Activated naive CD4-positive, alpha-beta T cell treated with anti-CD3 and anti-CD28 coated beads, Interleukin-2, amount 10 ng/mL, durations not matched to agents 7 days and 5 days (primary cell): ENCODE measurements at regions of chr2 and their contacts with region 1.

Region 1: GRCh38 chr2:10072656-10073480 is 7.3 kb downstream of the CYS1 start:
- DNase-seq: peak; percentile 88
- H3K4me3 Mint-ChIP-seq: no peak overlapping the region
- H3K27ac Mint-ChIP-seq: no peak overlapping the region
- H3K4me1 Mint-ChIP-seq: peaks cover 6% of the 10 kb centered on the region
- H3K27me3 Mint-ChIP-seq: peaks cover 72% of the 10 kb centered on the region

Region 2: GRCh38 chr2:9984217-9984739 is 88.6 kb before region 1 on chr2:
- CTCF ChIA-PET with region 1: interaction called, 11 read pairs
- DNase-seq: no peak
- H3K4me3 Mint-ChIP-seq: no peak overlapping the region
- H3K27ac Mint-ChIP-seq: no peak overlapping the region
- H3K4me1 Mint-ChIP-seq: peaks cover 14% of the 10 kb centered on the region
- H3K27me3 Mint-ChIP-seq: peaks cover 40% of the 10 kb centered on the region

Region 3: DNA sequence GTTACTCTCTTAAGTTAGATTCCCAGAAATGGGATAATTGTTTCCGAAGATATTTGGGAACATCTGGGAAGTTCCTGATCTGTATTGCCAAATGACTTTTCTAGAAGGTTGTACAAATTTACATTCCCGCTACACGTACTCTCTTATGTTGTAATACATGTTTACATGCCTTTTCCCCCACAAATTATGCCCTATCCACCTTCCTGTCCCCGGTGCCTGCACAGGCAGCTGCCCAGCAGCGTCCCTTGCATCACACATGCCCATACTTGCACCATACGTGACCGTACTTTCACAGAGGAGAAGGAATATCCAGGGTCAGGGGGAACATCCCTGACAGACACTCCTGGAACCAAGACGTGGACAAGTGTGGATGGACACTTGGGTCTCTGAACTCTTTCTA is 53.7 kb before region 1 on chr2:
- CTCF ChIA-PET with region 1: no interaction called
- DNase-seq: no peak
- H3K4me3 Mint-ChIP-seq: no peak overlapping the region
- H3K27ac Mint-ChIP-seq: no peak overlapping the region
- H3K4me1 Mint-ChIP-seq: no peaks in the 10 kb centered on the region
- H3K27me3 Mint-ChIP-seq: peaks cover 45% of the 10 kb centered on the region

Region 4: DNA sequence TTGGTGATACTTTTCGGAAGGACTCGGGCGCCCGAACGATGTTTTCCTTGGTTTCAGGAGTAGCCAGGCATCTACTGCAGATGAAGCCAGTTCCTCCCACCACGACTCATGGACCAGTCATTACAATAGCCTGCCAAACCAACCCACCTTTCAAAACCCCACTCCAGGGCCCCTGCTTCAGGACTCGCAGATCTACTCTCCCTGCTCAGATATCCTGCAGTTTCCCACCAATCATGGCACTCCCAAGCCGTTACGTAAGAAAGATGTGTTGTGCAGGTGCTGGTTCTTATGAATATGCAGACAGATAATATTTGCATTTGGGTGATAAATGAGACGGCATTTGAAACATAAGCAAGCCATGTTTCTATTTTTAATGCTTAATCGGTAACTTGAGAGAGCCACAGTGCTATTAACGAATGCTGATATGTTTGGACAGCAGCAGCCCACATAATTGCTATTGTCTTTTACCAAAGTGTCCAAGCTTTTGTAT is 10.9 kb after region 1 on chr2:
- CTCF ChIA-PET with region 1: interaction called, 48 read pairs
- DNase-seq: no peak
- H3K4me3 Mint-ChIP-seq: no peak overlapping the region
- H3K27ac Mint-ChIP-seq: no peak overlapping the region
- H3K4me1 Mint-ChIP-seq: peaks cover 14% of the 10 kb centered on the region
- H3K27me3 Mint-ChIP-seq: peaks cover 91% of the 10 kb centered on the region

Region 5: GRCh38 chr2:10097352-10098148 is 24.7 kb after region 1 on chr2:
- CTCF ChIA-PET with region 1: interaction called, 83 read pairs
- DNase-seq: peak; percentile 51
- H3K4me3 Mint-ChIP-seq: no peak overlapping the region
- H3K27ac Mint-ChIP-seq: no peak overlapping the region
- H3K4me1 Mint-ChIP-seq: peaks cover 6% of the 10 kb centered on the region
- H3K27me3 Mint-ChIP-seq: peaks cover 78% of the 10 kb centered on the region

Region 6: GRCh38 chr2:10122386-10123280 is 49.8 kb after region 1 on chr2 and contains the start of gene RRM2:
- CTCF ChIA-PET with region 1: interaction called, 52 read pairs
- DNase-seq: peak; percentile 96
- H3K4me3 Mint-ChIP-seq: peak within 1 kb of the TSS; percentile 95
- H3K27ac Mint-ChIP-seq: peak within 1 kb of the TSS; percentile 98
- H3K4me1 Mint-ChIP-seq: peaks cover 75% of the 10 kb centered on the region
- H3K27me3 Mint-ChIP-seq: no peaks in the 10 kb centered on the region

Region 7: GRCh38 chr2:10408649-10409579 is 336.0 kb after region 1 on chr2:
- CTCF ChIA-PET with region 1: interaction called, 10 read pairs
- DNase-seq: peak; percentile 88
- H3K4me3 Mint-ChIP-seq: peak overlapping the region; percentile 56
- H3K27ac Mint-ChIP-seq: peak overlapping the region; percentile 92
- H3K4me1 Mint-ChIP-seq: peaks cover 42% of the 10 kb centered on the region
- H3K27me3 Mint-ChIP-seq: no peaks in the 10 kb centered on the region